ENCODE measurements at regions of chr20 and their contacts with region 1.

Region 1: GRCh38 chr20:57398231-57398821 is 7.1 kb downstream of the RBM38 start:
- DNase-seq: peak; percentile 67 to 94 (median 93)
- ATAC-seq: peak; percentile 87
- H3K4me3 ChIP-seq: peak overlapping the region; percentile 68
- H3K4me3 Mint-ChIP-seq: peak overlapping the region; percentile 82 to 96 (median 86)
- H3K27ac ChIP-seq: peak overlapping the region; percentile 83
- H3K27ac Mint-ChIP-seq: peak overlapping the region; percentile 92 to 100 (median 99)
- H3K4me1 ChIP-seq: peaks cover 90 to 98% of the 10 kb centered on the region in 2 donors
- H3K4me1 Mint-ChIP-seq: peaks cover 64 to 98% (median 94%) of the 10 kb centered on the region in 7 donors
- H3K27me3 ChIP-seq: no peaks in the 10 kb centered on the region
- H3K27me3 Mint-ChIP-seq: no peaks in the 10 kb centered on the region

Region 2: GRCh38 chr20:56468316-56469082 is 929.8 kb before region 1 on chr20 and contains the start of gene RTF2:
- CTCF ChIA-PET with region 1: no interaction called
- POLR2A ChIA-PET with region 1: no interaction called
- intact Hi-C with region 1: loop called in 1 of 2 experiments (anchors 5 kb)
- DNase-seq: peak; percentile 93 to 99 (median 96)
- ATAC-seq: peak; percentile 99
- H3K4me3 ChIP-seq: peak within 1 kb of the TSS; percentile 74
- H3K4me3 Mint-ChIP-seq: peak within 1 kb of the TSS; percentile 94 to 100 (median 100)
- H3K27ac ChIP-seq: peak within 1 kb of the TSS; percentile 88
- H3K27ac Mint-ChIP-seq: peak within 1 kb of the TSS; percentile 95 to 100 (median 99)
- H3K4me1 ChIP-seq: peaks cover 27 to 31% of the 10 kb centered on the region in 2 donors
- H3K4me1 Mint-ChIP-seq: peaks cover 27 to 53% (median 48%) of the 10 kb centered on the region in 7 donors
- H3K27me3 ChIP-seq: no peaks in the 10 kb centered on the region
- H3K27me3 Mint-ChIP-seq: no peaks in the 10 kb centered on the region
- total RNA-seq, gene RTF2: 62.5 to 118 (median 72.0) TPM

Region 3: DNA sequence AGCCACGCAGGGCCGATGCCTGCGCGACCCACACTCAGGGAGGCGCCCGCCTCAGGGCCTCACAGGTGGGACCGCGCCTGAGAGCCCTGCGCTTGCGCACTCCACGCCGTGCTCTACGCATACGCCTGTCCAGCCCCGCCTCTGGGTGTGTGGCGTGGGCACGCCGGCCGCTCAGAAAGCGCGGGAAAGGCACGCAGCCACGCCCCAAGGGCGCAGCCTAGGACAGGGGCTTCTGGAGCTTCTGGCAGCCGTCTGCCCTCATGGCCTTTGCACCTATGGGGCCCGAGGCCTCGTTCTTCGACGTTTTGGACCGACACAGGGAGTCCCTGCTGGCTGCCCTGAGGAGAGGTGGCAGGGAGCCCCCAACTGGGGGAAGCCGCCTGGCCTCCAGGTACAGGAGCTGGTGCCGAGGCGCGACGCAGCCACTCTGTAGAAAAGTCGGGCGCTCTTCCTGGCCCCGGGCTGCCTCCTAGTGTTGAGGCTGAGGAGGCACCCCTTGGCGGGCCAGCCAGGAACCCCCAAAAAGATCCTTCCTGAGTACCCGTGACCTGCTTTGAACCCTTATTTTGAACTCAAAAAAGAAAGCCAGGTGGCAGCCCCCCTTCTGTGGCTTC is 68.6 kb before region 1 on chr20 and contains the start of gene SPO11:
- CTCF ChIA-PET with region 1: no interaction called
- POLR2A ChIA-PET with region 1: no interaction called
- intact Hi-C with region 1: no loop called
- DNase-seq: no peak
- ATAC-seq: no peak
- H3K4me3 ChIP-seq: no peak within 1 kb of the TSS
- H3K4me3 Mint-ChIP-seq: no peak within 1 kb of the TSS
- H3K27ac ChIP-seq: no peak within 1 kb of the TSS
- H3K27ac Mint-ChIP-seq: no peak within 1 kb of the TSS
- H3K4me1 ChIP-seq: no peaks in the 10 kb centered on the region
- H3K4me1 Mint-ChIP-seq: no peaks in the 10 kb centered on the region
- H3K27me3 ChIP-seq: no peaks in the 10 kb centered on the region
- H3K27me3 Mint-ChIP-seq: peaks cover 25 to 60% (median 38%) of the 10 kb centered on the region in 5 donors
- total RNA-seq, gene SPO11: not detected

Region 4: DNA sequence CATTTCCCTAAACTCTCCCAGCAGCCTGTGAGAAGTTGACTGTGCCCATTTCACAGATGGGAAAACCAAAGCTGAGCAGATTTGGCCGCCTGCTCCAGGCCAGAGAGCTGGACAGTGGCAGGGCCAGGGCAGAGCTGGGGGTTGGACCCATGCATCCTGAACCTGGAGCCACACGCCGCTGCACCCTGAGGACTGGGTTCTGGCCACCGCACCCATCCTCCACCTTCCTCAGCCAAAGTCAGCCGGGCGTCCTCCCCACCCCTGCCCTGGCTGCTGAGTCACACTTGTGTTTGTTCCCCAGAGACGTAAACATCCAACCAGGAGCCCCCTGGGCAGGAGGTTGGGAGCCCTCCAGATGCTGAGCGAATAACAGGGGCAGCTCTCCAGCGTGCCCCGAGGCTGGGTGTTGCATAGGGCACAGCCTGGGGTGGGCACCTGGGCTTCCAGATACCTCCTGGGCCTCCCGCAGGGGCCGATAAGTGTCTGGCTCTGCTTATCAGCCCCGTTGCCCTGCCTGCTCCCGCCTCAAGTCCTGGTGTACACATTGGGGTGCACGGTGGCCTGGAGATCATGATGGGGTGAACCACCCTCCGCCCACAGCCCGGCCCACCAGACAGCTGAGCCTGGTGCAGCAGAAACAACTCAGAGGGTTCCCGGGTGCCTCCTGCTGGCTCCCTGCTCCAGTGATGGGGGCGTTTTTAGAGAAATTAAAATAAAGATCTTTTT is 16.7 kb after region 1 on chr20:
- CTCF ChIA-PET with region 1: interaction called, 3 read pairs
- POLR2A ChIA-PET with region 1: interaction called, 35 read pairs
- intact Hi-C with region 1: loop called in 1 of 2 experiments (anchors 2 kb)
- DNase-seq: no peak
- ATAC-seq: peak; percentile 38
- H3K4me3 ChIP-seq: no peak overlapping the region
- H3K4me3 Mint-ChIP-seq: no peak overlapping the region
- H3K27ac ChIP-seq: no peak overlapping the region
- H3K27ac Mint-ChIP-seq: peak overlapping the region in 1 of 9 donors; percentile 60
- H3K4me1 ChIP-seq: peaks cover 0 to 3% of the 10 kb centered on the region in 2 donors
- H3K4me1 Mint-ChIP-seq: peaks cover 13 to 33% (median 25%) of the 10 kb centered on the region in 7 donors
- H3K27me3 ChIP-seq: no peaks in the 10 kb centered on the region
- H3K27me3 Mint-ChIP-seq: peaks cover 0 to 9% (median 0%) of the 10 kb centered on the region in 5 donors

Region 5: GRCh38 chr20:57480444-57481160 is 82.3 kb after region 1 on chr20:
- CTCF ChIA-PET with region 1: no interaction called
- POLR2A ChIA-PET with region 1: interaction called, 13 read pairs
- intact Hi-C with region 1: no loop called
- DNase-seq: peak in 6 of 9 donors; percentile 16 to 53 (median 36)
- ATAC-seq: peak; percentile 74
- H3K4me3 ChIP-seq: no peak overlapping the region
- H3K4me3 Mint-ChIP-seq: peak overlapping the region in 9 of 10 donors; percentile 49 to 81 (median 74)
- H3K27ac ChIP-seq: peak overlapping the region; percentile 47
- H3K27ac Mint-ChIP-seq: peak overlapping the region in 8 of 9 donors; percentile 48 to 87 (median 85)
- H3K4me1 ChIP-seq: peaks cover 7 to 26% of the 10 kb centered on the region in 2 donors
- H3K4me1 Mint-ChIP-seq: peaks cover 5 to 54% (median 31%) of the 10 kb centered on the region in 7 donors
- H3K27me3 ChIP-seq: no peaks in the 10 kb centered on the region
- H3K27me3 Mint-ChIP-seq: peaks cover 0 to 25% (median 0%) of the 10 kb centered on the region in 5 donors

Region 6: DNA sequence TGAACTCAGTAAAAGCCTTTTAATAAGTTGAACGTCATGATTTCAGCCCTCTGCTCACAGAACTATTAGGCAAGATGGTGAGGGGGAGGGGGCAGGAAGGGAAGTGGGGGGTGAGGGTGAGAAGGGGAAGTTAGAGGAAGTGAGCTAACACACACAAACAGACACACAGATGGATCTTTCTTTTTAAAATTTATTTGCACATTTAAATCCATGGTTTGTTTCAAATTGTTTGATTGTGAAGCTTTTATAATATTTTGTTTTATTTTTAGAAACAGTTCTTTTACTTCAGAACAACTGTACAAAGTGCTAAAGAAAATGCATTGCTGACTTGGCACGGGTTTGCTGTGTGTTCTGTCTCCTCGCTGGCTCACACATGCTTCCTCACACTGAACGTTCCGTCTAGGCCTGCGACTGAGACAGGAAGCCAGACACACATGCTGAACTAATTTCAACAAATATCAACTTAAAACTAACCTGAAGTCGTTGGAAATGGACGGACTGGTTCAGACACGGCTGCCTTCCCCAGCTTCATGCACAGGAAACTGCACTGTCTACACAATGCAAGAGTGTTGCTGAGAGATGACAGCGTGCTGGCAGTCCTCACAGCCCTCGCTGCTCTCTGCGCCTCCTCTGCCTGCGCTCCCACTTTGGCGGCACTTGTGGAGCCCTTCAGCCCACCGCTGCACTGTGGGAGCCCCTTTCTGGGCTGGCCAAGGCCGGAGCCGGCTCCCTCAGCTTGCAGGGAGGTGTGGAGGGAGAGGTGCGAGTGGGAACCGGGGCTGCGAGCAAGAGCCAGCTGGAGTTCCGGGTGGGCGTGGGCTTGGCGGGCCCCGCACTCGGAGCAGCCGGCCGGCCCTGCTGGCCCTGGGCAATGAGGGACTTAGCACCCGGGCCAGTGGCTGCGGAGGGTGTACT is 230.0 kb after region 1 on chr20:
- CTCF ChIA-PET with region 1: no interaction called
- POLR2A ChIA-PET with region 1: interaction called, 14 read pairs
- intact Hi-C with region 1: loop called in 1 of 2 experiments (anchors 1 kb)
- DNase-seq: peak in 7 of 9 donors; percentile 62 to 81 (median 71)
- ATAC-seq: peak; percentile 88
- H3K4me3 ChIP-seq: peak overlapping the region; percentile 49
- H3K4me3 Mint-ChIP-seq: peak overlapping the region; percentile 85 to 97 (median 91)
- H3K27ac ChIP-seq: peak overlapping the region; percentile 83
- H3K27ac Mint-ChIP-seq: peak overlapping the region; percentile 92 to 100 (median 98)
- H3K4me1 ChIP-seq: peaks cover 41 to 51% of the 10 kb centered on the region in 2 donors
- H3K4me1 Mint-ChIP-seq: peaks cover 38 to 94% (median 80%) of the 10 kb centered on the region in 7 donors
- H3K27me3 ChIP-seq: no peaks in the 10 kb centered on the region
- H3K27me3 Mint-ChIP-seq: peaks cover 0 to 53% (median 0%) of the 10 kb centered on the region in 5 donors

Region 7: GRCh38 chr20:58014628-58015315 is 616.4 kb after region 1 on chr20:
- CTCF ChIA-PET with region 1: no interaction called
- POLR2A ChIA-PET with region 1: no interaction called
- intact Hi-C with region 1: no loop called
- DNase-seq: peak in 7 of 9 donors; percentile 31 to 67 (median 59)
- ATAC-seq: peak; percentile 76
- H3K4me3 ChIP-seq: no peak overlapping the region
- H3K4me3 Mint-ChIP-seq: peak overlapping the region in 4 of 10 donors; percentile 14 to 50 (median 40)
- H3K27ac ChIP-seq: no peak overlapping the region
- H3K27ac Mint-ChIP-seq: peak overlapping the region in 4 of 9 donors; percentile 25 to 65 (median 62)
- H3K4me1 ChIP-seq: peaks cover 0 to 12% of the 10 kb centered on the region in 2 donors
- H3K4me1 Mint-ChIP-seq: peaks cover 10 to 20% (median 16%) of the 10 kb centered on the region in 7 donors
- H3K27me3 ChIP-seq: no peaks in the 10 kb centered on the region
- H3K27me3 Mint-ChIP-seq: peaks cover 1 to 21% (median 12%) of the 10 kb centered on the region in 5 donors